MCF 10A (cell line): ENCODE measurements at regions of chr6 and their contacts with region 1.

Region 1: DNA sequence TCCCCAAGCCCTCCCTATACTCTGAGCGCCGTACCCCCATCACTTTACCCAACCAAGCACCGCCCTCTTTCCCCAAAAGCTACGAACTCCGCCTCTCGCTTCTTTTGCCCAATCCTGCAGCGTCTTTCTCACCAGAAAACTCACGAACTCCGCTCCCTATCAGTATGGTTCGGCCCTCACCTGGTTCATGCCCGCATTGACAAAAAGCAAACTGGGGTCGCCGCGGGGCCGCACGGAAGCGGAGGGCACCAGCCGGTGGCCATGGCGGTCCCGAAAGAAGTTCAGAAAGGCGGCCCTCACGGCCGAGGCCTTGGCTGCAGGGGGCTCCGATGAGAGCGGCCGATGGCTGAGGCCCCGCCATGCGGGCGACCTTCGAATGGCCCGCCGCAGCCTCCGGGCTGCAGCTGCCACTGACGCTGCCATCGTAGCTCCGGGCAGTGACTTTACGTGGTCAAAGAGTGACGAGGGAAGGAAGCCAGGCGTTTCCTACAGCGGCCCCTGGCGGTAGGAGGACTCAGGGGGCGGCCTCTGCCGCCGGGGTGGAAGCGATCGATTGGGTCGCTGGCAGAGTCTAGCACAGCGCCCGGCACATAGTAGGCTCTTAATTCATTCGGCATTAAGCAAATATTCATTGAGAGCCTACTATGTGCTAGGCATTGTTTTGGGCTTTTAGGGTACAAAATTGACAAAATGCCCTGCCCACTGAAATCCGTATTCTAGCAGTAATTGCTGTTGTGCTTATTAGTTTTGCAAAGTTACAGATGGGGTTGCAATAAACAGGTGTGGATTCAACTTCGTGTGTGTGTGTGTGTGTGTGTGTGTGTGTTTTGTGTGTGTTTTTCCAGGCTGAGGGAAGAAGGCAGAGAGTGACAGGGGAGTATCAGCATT is at the start of gene AARS2:
- DNase-seq: peak; percentile 83
- H3K4me3 Mint-ChIP-seq: peak within 1 kb of the TSS; percentile 98
- H3K27ac Mint-ChIP-seq: peak within 1 kb of the TSS; percentile 94
- H3K4me1 Mint-ChIP-seq: peaks cover 25% of the 10 kb centered on the region
- H3K27me3 Mint-ChIP-seq: peaks cover 23% of the 10 kb centered on the region
- CTCF ChIP-seq: peak; percentile 96
- total RNA-seq, gene AARS2: 15.5 and 23.2 TPM in 2 replicates

Region 2: GRCh38 chr6:43817192-43817591 is 496.0 kb before region 1 on chr6:
- CTCF ChIA-PET with region 1: no interaction called
- POLR2A ChIA-PET with region 1: no interaction called
- intact Hi-C with region 1: no loop called
- DNase-seq: peak; percentile 35
- H3K4me3 Mint-ChIP-seq: no peak overlapping the region
- H3K27ac Mint-ChIP-seq: no peak overlapping the region
- H3K4me1 Mint-ChIP-seq: peaks cover 5% of the 10 kb centered on the region
- H3K27me3 Mint-ChIP-seq: peaks cover 15% of the 10 kb centered on the region
- CTCF ChIP-seq: no peak

Region 3: DNA sequence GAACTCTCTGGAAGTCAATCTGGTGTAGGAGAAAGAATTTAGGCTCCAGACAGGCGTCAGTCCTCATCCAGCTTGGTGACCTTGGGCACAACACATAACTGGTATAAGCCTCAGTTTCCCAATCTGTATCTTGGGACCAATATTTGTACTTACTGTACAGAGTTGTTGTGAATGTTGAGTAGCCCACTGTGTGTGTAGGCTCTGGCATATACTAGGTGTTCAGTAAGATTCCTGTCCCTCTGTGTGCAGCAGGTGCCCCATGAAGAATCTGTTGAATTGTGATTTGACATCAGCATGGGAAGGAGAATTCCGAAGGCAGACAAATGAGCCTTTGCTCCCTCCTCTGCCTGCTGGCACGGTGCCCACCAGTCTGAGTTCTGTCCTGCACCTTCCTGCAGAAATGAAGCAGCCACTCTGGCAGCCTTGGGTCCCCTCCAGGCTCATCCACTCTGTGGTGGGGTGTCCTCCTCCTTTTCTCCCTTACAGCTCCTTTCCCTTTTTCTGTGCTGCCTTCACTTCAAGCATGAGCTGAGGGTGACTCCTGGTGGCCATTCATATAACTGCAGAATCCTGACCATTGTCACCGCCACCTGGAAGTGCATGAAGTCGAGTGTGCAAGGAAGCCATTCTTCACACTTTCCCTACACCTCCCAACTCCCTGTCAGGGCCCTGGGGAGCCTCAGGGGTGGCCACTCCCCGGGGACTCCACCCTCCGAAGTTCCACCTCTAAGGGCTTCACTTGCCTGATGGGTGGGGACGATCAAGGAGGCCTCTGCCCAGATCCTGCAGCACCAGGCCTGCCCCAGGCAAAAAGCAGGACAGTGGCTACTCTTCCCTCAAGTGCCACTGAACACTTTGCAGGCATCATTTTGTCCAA is 234.1 kb before region 1 on chr6:
- CTCF ChIA-PET with region 1: no interaction called
- POLR2A ChIA-PET with region 1: no interaction called
- intact Hi-C with region 1: no loop called
- DNase-seq: peak; percentile 84
- H3K4me3 Mint-ChIP-seq: no peak overlapping the region
- H3K27ac Mint-ChIP-seq: no peak overlapping the region
- H3K4me1 Mint-ChIP-seq: peaks cover 7% of the 10 kb centered on the region
- H3K27me3 Mint-ChIP-seq: no peaks in the 10 kb centered on the region
- CTCF ChIP-seq: peak; percentile 89

Region 4: GRCh38 chr6:44265007-44265721 is 48.0 kb before region 1 on chr6 and contains the start of gene NFKBIE:
- CTCF ChIA-PET with region 1: interaction called, 19 read pairs
- POLR2A ChIA-PET with region 1: interaction called, 9 read pairs
- intact Hi-C with region 1: loop called (anchors 2 kb)
- DNase-seq: peak; percentile 92
- H3K4me3 Mint-ChIP-seq: peak within 1 kb of the TSS; percentile 91
- H3K27ac Mint-ChIP-seq: peak within 1 kb of the TSS; percentile 77
- H3K4me1 Mint-ChIP-seq: peaks cover 23% of the 10 kb centered on the region
- H3K27me3 Mint-ChIP-seq: peaks cover 9% of the 10 kb centered on the region
- CTCF ChIP-seq: no peak
- total RNA-seq, gene NFKBIE: 6.0 and 8.8 TPM in 2 replicates

Region 5: GRCh38 chr6:44327096-44327495 is 14.0 kb after region 1 on chr6:
- CTCF ChIA-PET with region 1: interaction called, 15 read pairs
- POLR2A ChIA-PET with region 1: interaction called, 6 read pairs
- intact Hi-C with region 1: no loop called
- DNase-seq: no peak
- H3K4me3 Mint-ChIP-seq: no peak overlapping the region
- H3K27ac Mint-ChIP-seq: no peak overlapping the region
- H3K4me1 Mint-ChIP-seq: no peaks in the 10 kb centered on the region
- H3K27me3 Mint-ChIP-seq: peaks cover 12% of the 10 kb centered on the region
- CTCF ChIP-seq: no peak

Region 6: DNA sequence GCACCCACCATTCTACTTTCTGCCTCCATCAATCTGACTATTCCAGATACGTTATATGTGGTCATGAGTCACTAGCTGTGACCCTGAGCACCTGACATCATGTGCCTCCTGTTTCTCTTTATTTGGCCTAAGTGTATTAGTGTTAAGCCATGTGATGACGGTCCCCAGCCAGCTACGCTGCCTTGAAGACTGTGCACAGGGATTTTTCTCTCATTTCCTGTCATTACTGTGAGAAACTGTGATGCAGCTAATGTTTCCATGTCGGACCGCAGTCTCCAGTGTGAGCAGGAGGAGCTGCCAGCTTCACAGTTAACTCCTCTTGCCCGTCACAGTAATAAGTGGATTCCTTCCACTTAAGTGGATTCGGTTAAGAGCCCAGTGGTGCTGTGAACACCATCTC is 19.4 kb after region 1 on chr6:
- CTCF ChIA-PET with region 1: interaction called, 33 read pairs
- POLR2A ChIA-PET with region 1: no interaction called
- intact Hi-C with region 1: no loop called
- DNase-seq: no peak
- H3K4me3 Mint-ChIP-seq: no peak overlapping the region
- H3K27ac Mint-ChIP-seq: no peak overlapping the region
- H3K4me1 Mint-ChIP-seq: no peaks in the 10 kb centered on the region
- H3K27me3 Mint-ChIP-seq: peaks cover 31% of the 10 kb centered on the region
- CTCF ChIP-seq: no peak

Region 7: DNA sequence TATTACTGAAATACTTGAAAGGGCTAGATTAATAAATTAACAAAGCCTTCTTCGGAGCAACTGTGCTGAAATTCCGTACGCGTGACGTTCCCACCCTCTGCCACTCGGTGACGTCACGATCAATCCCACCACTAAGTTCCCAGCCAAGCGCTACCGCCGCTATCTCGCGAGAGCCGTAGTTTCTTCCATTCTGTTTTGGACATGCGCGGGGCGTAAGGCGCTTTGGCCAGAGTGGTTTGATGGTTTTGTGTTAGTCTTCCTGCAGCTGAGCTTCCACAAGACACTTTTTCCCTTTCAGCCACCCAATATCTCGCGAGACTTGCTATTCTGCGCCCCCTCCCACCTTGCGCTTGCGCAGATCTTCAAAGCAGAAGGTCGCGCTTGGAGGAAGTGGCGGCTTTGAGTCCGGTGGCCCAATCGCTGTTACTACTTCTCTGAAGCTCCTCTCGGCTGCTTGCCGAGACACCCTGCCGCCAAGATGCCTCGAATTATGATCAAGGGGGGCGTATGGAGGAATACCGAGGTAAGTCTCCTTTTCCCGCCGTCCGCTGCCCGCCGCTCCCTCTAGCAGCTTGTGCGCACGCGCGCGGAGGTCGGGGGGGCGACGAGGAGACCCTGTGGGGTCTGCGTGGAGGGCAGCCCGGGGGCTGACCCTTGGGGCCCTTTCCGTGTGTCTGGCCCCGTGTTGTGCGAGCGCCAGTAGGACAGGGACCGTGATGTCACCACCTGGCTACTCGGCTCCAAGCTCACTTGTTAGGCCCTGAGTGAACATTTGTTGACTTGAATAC is 74.4 kb after region 1 on chr6 and contains the start of gene CDC5L:
- CTCF ChIA-PET with region 1: interaction called, 3 read pairs
- POLR2A ChIA-PET with region 1: interaction called, 11 read pairs
- intact Hi-C with region 1: no loop called
- DNase-seq: peak; percentile 96
- H3K4me3 Mint-ChIP-seq: peak within 1 kb of the TSS; percentile 98
- H3K27ac Mint-ChIP-seq: peak within 1 kb of the TSS; percentile 98
- H3K4me1 Mint-ChIP-seq: peaks cover 20% of the 10 kb centered on the region
- H3K27me3 Mint-ChIP-seq: no peaks in the 10 kb centered on the region
- CTCF ChIP-seq: no peak
- total RNA-seq, gene CDC5L: 23.1 and 26.4 TPM in 2 replicates